Heart left ventricle (tissue), 16 donors: ENCODE measurements at regions of chr7 and their contacts with region 1.

Region 1: DNA sequence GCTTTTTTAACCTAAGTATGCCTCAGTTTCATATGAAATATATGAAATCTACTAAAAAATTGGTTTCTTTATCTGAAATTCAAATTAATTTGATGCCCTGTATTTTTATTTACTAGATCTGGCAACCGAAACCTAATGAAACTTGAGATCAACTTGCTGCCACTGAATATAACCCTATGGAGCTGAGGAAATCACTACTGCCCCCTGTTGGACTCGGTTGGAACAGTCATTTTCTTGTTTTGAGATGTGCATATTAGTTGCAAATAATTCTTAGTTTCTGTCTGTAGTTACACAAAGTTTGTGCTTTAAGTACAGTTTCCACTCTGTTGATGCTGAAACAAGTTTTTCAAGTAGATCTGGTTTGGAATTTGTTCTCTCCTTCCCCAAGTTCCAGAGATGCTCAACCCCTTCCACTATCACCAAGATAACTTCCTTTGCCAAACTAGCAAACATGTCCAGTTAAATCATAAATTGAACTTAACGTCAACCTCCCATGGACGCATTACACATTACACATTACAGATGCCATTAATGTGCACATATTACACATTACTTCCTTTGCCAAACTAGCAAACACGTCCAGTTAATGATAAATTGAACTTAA is 22.2 kb upstream of the EXOC4 start:
- DNase-seq: peak in 2 of 5 donors; percentile 20 to 23
- ATAC-seq: no peak
- H3K4me3 ChIP-seq: no peak overlapping the region
- H3K27ac ChIP-seq: no peak overlapping the region
- H3K4me1 ChIP-seq: peaks cover 0 to 7% (median 0%) of the 10 kb centered on the region in 12 donors
- H3K27me3 ChIP-seq: no peaks in the 10 kb centered on the region
- CTCF ChIP-seq: peak; percentile 58 to 82 (median 70)
- POLR2A ChIP-seq: no peak

Region 2: GRCh38 chr7:132709971-132710567 is 520.6 kb before region 1 on chr7:
- intact Hi-C with region 1: loop called in 1 of 10 experiments (anchors 5 kb)
- DNase-seq: peak in 1 of 5 donors; percentile 11
- ATAC-seq: no peak
- H3K4me3 ChIP-seq: no peak overlapping the region
- H3K27ac ChIP-seq: no peak overlapping the region
- H3K4me1 ChIP-seq: no peaks in the 10 kb centered on the region
- H3K27me3 ChIP-seq: no peaks in the 10 kb centered on the region
- CTCF ChIP-seq: peak; percentile 20 to 61 (median 42)
- POLR2A ChIP-seq: no peak

Region 3: GRCh38 chr7:132789281-132789680 is 441.4 kb before region 1 on chr7:
- intact Hi-C with region 1: loop called in 1 of 10 experiments (anchors 5 kb)
- DNase-seq: no peak
- ATAC-seq: peak in 1 of 4 donors; percentile 31
- H3K4me3 ChIP-seq: no peak overlapping the region
- H3K27ac ChIP-seq: no peak overlapping the region
- H3K4me1 ChIP-seq: peaks cover 0 to 20% (median 7%) of the 10 kb centered on the region in 12 donors
- H3K27me3 ChIP-seq: no peaks in the 10 kb centered on the region
- CTCF ChIP-seq: no peak
- POLR2A ChIP-seq: no peak

Region 4: DNA sequence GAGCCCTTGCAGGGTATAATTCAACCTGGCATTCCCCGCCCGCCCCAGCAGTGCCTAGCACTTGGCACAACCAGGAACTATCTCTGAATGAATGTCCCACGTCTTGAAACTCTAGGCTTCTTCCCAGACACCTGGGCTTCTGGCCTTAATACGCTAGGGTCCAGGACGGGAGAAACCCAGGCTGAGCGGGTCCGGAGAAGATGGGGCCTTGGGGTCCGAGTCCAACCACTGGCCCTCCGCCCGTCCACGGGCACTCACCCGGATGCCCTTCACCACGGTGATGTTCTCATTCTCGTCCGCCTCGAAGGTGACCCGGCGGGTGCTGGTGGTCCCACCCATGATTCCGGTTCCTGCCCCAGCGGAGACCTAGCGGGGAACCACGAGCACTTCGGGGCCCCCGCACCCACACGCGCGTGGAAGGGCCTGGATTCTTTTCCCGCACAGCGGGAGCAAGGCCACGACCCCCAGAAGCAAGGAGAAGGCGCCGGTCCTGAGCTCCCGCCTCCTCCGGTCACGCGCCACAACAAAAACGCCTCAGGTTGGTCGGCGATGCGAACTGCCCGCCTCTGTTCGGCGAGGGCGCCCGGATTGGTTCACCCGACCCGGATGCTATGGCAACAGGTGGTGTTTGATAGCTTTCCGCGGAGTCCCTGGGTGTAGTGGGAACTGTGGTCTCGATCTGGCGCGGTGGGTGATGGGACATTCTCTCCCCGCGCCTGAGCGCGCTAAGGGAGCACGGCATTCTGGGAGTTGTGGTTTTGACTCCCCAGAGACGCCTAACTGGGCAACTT is 148.9 kb before region 1 on chr7 and contains the start of gene CHCHD3:
- intact Hi-C with region 1: loop called in 1 of 10 experiments (anchors 10 kb)
- DNase-seq: peak; percentile 98 to 99 (median 98)
- ATAC-seq: peak; percentile 99 to 100 (median 100)
- H3K4me3 ChIP-seq: peak within 1 kb of the TSS; percentile 52 to 95 (median 86)
- H3K27ac ChIP-seq: peak within 1 kb of the TSS; percentile 46 to 95 (median 88)
- H3K4me1 ChIP-seq: peaks cover 0 to 49% (median 29%) of the 10 kb centered on the region in 12 donors
- H3K27me3 ChIP-seq: no peaks in the 10 kb centered on the region
- CTCF ChIP-seq: no peak
- POLR2A ChIP-seq: peak; percentile 42 to 82
- total RNA-seq, gene CHCHD3: 92.9 to 197 (median 176) TPM

Region 5: GRCh38 chr7:133412942-133413341 is 182.2 kb after region 1 on chr7:
- intact Hi-C with region 1: loop called in 1 of 10 experiments (anchors 10 kb)
- DNase-seq: no peak
- ATAC-seq: no peak
- H3K4me3 ChIP-seq: no peak overlapping the region
- H3K27ac ChIP-seq: no peak overlapping the region
- H3K4me1 ChIP-seq: peaks cover 0 to 11% (median 0%) of the 10 kb centered on the region in 12 donors
- H3K27me3 ChIP-seq: no peaks in the 10 kb centered on the region
- CTCF ChIP-seq: peak in 5 of 12 donors; percentile 9 to 40 (median 23)
- POLR2A ChIP-seq: no peak

Region 6: GRCh38 chr7:133434055-133434865 is 203.6 kb after region 1 on chr7:
- intact Hi-C with region 1: loop called in 1 of 10 experiments (anchors 10 kb)
- DNase-seq: no peak
- ATAC-seq: peak in 1 of 4 donors; percentile 31
- H3K4me3 ChIP-seq: no peak overlapping the region
- H3K27ac ChIP-seq: no peak overlapping the region
- H3K4me1 ChIP-seq: peaks cover 0 to 19% (median 0%) of the 10 kb centered on the region in 12 donors
- H3K27me3 ChIP-seq: no peaks in the 10 kb centered on the region
- CTCF ChIP-seq: peak in 11 of 12 donors; percentile 20 to 59 (median 45)
- POLR2A ChIP-seq: no peak